ENCODE measurements at regions of chr15 and their contacts with region 1.

Region 1: GRCh38 chr15:38699633-38700230 is 135.1 kb upstream of the RASGRP1 start:
- DNase-seq: no peak
- ATAC-seq: peak; percentile 68
- H3K4me3 ChIP-seq: no peak overlapping the region
- H3K27ac ChIP-seq: no peak overlapping the region
- H3K4me1 ChIP-seq: peaks cover 19% of the 10 kb centered on the region
- H3K27me3 ChIP-seq: no peaks in the 10 kb centered on the region
- CTCF ChIP-seq: peak; percentile 85 to 92 (median 87)
- EP300 ChIP-seq: no peak
- POLR2A ChIP-seq: no peak
- RAD21 ChIP-seq: peak; percentile 79

Region 2: GRCh38 chr15:38453971-38454695 is 245.6 kb before region 1 on chr15 and contains the start of gene FAM98B:
- CTCF ChIA-PET with region 1: interaction called, 30 read pairs
- POLR2A ChIA-PET with region 1: interaction called, 9 read pairs
- RAD21 ChIA-PET with region 1: interaction called, 31 read pairs
- SMC1A ChIA-PET with region 1: interaction called, 28 read pairs
- in situ Hi-C with region 1: loop called (anchors 10 kb)
- intact Hi-C with region 1: no loop called
- DNase-seq: peak; percentile 62
- ATAC-seq: peak; percentile 93
- H3K4me3 ChIP-seq: peak within 1 kb of the TSS; percentile 84
- H3K27ac ChIP-seq: peak within 1 kb of the TSS; percentile 85
- H3K4me1 ChIP-seq: no peaks in the 10 kb centered on the region
- H3K27me3 ChIP-seq: no peaks in the 10 kb centered on the region
- CTCF ChIP-seq: no peak
- EP300 ChIP-seq: no peak; a peak in 1 of 4 replicates
- POLR2A ChIP-seq: peak; percentile 94
- RAD21 ChIP-seq: no peak
- polyA plus RNA-seq, gene FAM98B: 4.2 to 8.4 TPM

Region 3: GRCh38 chr15:38479266-38479665 is 220.5 kb before region 1 on chr15:
- CTCF ChIA-PET with region 1: interaction called, 141 read pairs
- POLR2A ChIA-PET with region 1: no interaction called
- RAD21 ChIA-PET with region 1: interaction called, 46 read pairs
- SMC1A ChIA-PET with region 1: interaction called, 138 read pairs
- in situ Hi-C with region 1: no loop called
- intact Hi-C with region 1: loop called (anchors 1 kb)
- DNase-seq: no peak
- ATAC-seq: no peak
- H3K4me3 ChIP-seq: no peak overlapping the region
- H3K27ac ChIP-seq: no peak overlapping the region
- H3K4me1 ChIP-seq: no peaks in the 10 kb centered on the region
- H3K27me3 ChIP-seq: no peaks in the 10 kb centered on the region
- CTCF ChIP-seq: no peak
- EP300 ChIP-seq: no peak
- POLR2A ChIP-seq: no peak
- RAD21 ChIP-seq: no peak

Region 4: GRCh38 chr15:38521316-38521715 is 178.4 kb before region 1 on chr15:
- CTCF ChIA-PET with region 1: interaction called, 11 read pairs
- POLR2A ChIA-PET with region 1: no interaction called
- RAD21 ChIA-PET with region 1: interaction called, 6 read pairs
- SMC1A ChIA-PET with region 1: interaction called, 6 read pairs
- in situ Hi-C with region 1: no loop called
- intact Hi-C with region 1: no loop called
- DNase-seq: no peak
- ATAC-seq: no peak
- H3K4me3 ChIP-seq: no peak overlapping the region
- H3K27ac ChIP-seq: no peak overlapping the region
- H3K4me1 ChIP-seq: no peaks in the 10 kb centered on the region
- H3K27me3 ChIP-seq: no peaks in the 10 kb centered on the region
- CTCF ChIP-seq: no peak
- EP300 ChIP-seq: no peak
- POLR2A ChIP-seq: no peak
- RAD21 ChIP-seq: no peak

Region 5: GRCh38 chr15:38624244-38625205 is 75.2 kb before region 1 on chr15:
- CTCF ChIA-PET with region 1: interaction called, 6 read pairs
- POLR2A ChIA-PET with region 1: interaction called, 3 read pairs
- RAD21 ChIA-PET with region 1: interaction called, 18 read pairs
- SMC1A ChIA-PET with region 1: interaction called, 14 read pairs
- in situ Hi-C with region 1: no loop called
- intact Hi-C with region 1: no loop called
- DNase-seq: no peak
- ATAC-seq: peak; percentile 33
- H3K4me3 ChIP-seq: no peak overlapping the region
- H3K27ac ChIP-seq: no peak overlapping the region
- H3K4me1 ChIP-seq: no peaks in the 10 kb centered on the region
- H3K27me3 ChIP-seq: no peaks in the 10 kb centered on the region
- CTCF ChIP-seq: 0 out of 6 replicates have a peak, but pooled peaks of 1 of the 3 experiments have one; percentile 3
- EP300 ChIP-seq: no peak
- POLR2A ChIP-seq: no peak
- RAD21 ChIP-seq: no peak

Region 6: GRCh38 chr15:38724827-38725226 is 25.1 kb after region 1 on chr15:
- CTCF ChIA-PET with region 1: interaction called, 13 read pairs
- POLR2A ChIA-PET with region 1: no interaction called
- RAD21 ChIA-PET with region 1: no interaction called
- SMC1A ChIA-PET with region 1: interaction called, 6 read pairs
- in situ Hi-C with region 1: no loop called
- intact Hi-C with region 1: no loop called
- DNase-seq: no peak
- ATAC-seq: no peak
- H3K4me3 ChIP-seq: no peak overlapping the region
- H3K27ac ChIP-seq: no peak overlapping the region
- H3K4me1 ChIP-seq: no peaks in the 10 kb centered on the region
- H3K27me3 ChIP-seq: no peaks in the 10 kb centered on the region
- CTCF ChIP-seq: no peak
- EP300 ChIP-seq: no peak
- POLR2A ChIP-seq: no peak
- RAD21 ChIP-seq: no peak

Measured in GM12878 (cell line).